H1 (cell line): ENCODE measurements at regions of chr12 and their contacts with region 1.

Region 1: GRCh38 chr12:52032804-52033502 is 18.3 kb upstream of the NR4A1 start:
- DNase-seq: peak; percentile 87 to 90
- H3K4me3 ChIP-seq: peak overlapping the region; percentile 23 to 60 (median 38); a peak in 7 of 8 replicates
- H3K27ac ChIP-seq: peak overlapping the region; percentile 39; the same call in 1 of the 2 replicates
- H3K4me1 ChIP-seq: peaks cover 9 to 13% (median 11%) of the 10 kb centered on the region in 4 experiments
- H3K27me3 ChIP-seq: peaks cover 2 to 32% (median 22%) of the 10 kb centered on the region in 4 experiments; a peak in 6 of 7 replicates
- CTCF ChIP-seq: no peak
- EP300 ChIP-seq: peak in 1 of 2 experiments; percentile 31; a peak in 1 of 3 replicates
- POLR2A ChIP-seq: peak in 1 of 2 experiments; percentile 62; a peak in 2 of 3 replicates
- RAD21 ChIP-seq: no peak

Region 2: DNA sequence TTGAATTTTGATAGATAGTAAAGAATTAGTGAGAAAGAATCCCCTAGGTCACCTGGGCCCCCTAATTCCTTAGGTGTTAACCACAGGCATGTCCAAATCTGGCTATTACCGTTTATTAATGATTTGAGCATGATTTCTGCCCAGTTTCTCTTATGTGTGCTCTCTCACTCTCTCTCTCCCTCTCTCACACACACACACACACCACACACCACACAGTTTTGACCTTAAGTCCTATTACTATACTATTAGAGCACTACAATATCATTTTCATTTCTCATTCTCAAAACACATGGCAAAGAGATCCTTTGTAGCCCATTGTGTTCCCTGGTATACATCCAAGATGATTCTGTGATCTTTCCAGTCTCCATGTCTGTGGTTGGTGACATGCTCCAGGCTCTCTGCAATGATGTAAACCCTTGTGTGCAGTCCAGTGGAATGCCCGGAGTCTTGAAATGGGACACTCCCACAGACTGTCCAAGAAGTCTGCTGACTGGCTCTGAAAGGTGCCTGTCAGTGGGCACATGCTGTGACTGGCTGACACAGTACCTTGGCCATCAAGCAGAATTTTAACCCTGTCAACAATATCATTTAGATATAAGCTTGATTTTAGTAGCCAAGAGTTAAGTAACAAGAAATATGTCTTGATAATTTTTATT is 280.6 kb before region 1 on chr12:
- CTCF ChIA-PET with region 1: no interaction called
- POLR2A ChIA-PET with region 1: no interaction called
- DNase-seq: no peak
- H3K4me3 ChIP-seq: no peak overlapping the region
- H3K27ac ChIP-seq: no peak overlapping the region
- H3K4me1 ChIP-seq: no peaks in the 10 kb centered on the region
- H3K27me3 ChIP-seq: no peaks in the 10 kb centered on the region
- CTCF ChIP-seq: no peak
- EP300 ChIP-seq: no peak
- POLR2A ChIP-seq: no peak
- RAD21 ChIP-seq: no peak

Region 3: DNA sequence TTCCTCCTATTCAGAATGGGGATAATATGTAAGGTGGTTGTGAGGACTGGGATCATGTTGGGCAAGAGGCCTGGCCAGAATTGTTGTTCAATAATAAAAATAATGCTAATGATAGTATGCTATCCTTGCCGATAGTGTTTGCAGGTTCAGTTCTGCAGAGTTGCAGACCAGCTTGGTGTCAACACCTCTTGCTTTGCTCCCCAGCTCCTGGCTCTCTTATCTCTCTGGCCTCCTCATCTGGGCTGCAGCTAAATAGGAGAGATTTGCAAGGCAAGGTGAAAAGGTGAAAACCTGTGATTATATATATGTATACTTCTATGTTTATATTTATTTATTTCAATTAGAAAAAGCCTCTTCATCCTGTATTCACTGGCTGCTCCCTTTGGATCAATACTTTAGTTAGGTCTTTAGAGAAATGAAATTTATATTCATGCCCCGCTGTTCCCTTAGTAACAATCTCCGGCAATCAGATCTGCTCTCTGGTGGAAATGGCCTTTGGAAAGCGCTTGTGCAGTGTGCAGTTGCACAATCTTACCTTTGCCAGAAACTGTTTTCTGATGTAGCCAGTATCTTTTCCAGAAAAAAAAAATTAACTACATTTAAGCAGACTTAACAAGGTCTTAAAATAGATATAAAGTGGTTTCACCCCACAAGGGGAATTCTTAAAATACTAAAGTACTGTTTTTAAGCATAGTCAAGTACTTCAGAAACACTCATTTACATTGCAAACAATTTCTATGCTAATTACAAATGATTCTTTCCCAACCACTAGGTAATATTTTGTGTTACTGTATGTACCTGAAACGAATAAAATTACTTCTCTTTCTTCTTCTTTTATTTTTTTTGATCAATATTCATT is 100.5 kb before region 1 on chr12:
- CTCF ChIA-PET with region 1: no interaction called
- POLR2A ChIA-PET with region 1: no interaction called
- DNase-seq: no peak
- H3K4me3 ChIP-seq: no peak overlapping the region
- H3K27ac ChIP-seq: no peak overlapping the region
- H3K4me1 ChIP-seq: no peaks in the 10 kb centered on the region
- H3K27me3 ChIP-seq: no peaks in the 10 kb centered on the region
- CTCF ChIP-seq: no peak
- EP300 ChIP-seq: no peak
- POLR2A ChIP-seq: no peak
- RAD21 ChIP-seq: no peak

Region 4: GRCh38 chr12:51951199-51951842 is 81.6 kb before region 1 on chr12 and contains the start of gene ACVR1B:
- CTCF ChIA-PET with region 1: no interaction called
- POLR2A ChIA-PET with region 1: no interaction called
- DNase-seq: peak in 1 of 2 experiments; percentile 87
- H3K4me3 ChIP-seq: peak within 1 kb of the TSS; percentile 73 to 95 (median 90)
- H3K27ac ChIP-seq: peak within 1 kb of the TSS; percentile 52; the same call in 1 of the 2 replicates
- H3K4me1 ChIP-seq: peaks cover 0 to 3% (median 2%) of the 10 kb centered on the region in 4 experiments; a peak in 6 of 7 replicates
- H3K27me3 ChIP-seq: peaks cover 7 to 47% (median 34%) of the 10 kb centered on the region in 4 experiments
- CTCF ChIP-seq: no peak
- EP300 ChIP-seq: no peak
- POLR2A ChIP-seq: peak in 1 of 2 experiments; percentile 1; a peak in 1 of 3 replicates
- RAD21 ChIP-seq: no peak
- total RNA-seq, gene ACVR1B: 13.5 and 16.0 TPM in 2 replicates

Region 5: GRCh38 chr12:52050761-52051541 is 18.0 kb after region 1 on chr12 and contains the start of gene NR4A1:
- CTCF ChIA-PET with region 1: interaction called, 1,022 read pairs
- POLR2A ChIA-PET with region 1: interaction called, 38 read pairs
- DNase-seq: peak in 1 of 2 experiments; percentile 87
- H3K4me3 ChIP-seq: peak within 1 kb of the TSS; percentile 44 to 72 (median 64)
- H3K27ac ChIP-seq: no peak within 1 kb of the TSS
- H3K4me1 ChIP-seq: peaks cover 0 to 19% (median 9%) of the 10 kb centered on the region in 4 experiments; a peak in 6 of 7 replicates
- H3K27me3 ChIP-seq: peaks cover 4 to 44% (median 36%) of the 10 kb centered on the region in 4 experiments
- CTCF ChIP-seq: no peak
- EP300 ChIP-seq: 0 out of 3 replicates have a peak, but pooled peaks of 1 of the 2 experiments have one; percentile 7
- POLR2A ChIP-seq: no peak; a peak in 1 of 3 replicates
- RAD21 ChIP-seq: no peak
- total RNA-seq, gene NR4A1: 18.7 and 19.3 TPM in 2 replicates

Region 6: DNA sequence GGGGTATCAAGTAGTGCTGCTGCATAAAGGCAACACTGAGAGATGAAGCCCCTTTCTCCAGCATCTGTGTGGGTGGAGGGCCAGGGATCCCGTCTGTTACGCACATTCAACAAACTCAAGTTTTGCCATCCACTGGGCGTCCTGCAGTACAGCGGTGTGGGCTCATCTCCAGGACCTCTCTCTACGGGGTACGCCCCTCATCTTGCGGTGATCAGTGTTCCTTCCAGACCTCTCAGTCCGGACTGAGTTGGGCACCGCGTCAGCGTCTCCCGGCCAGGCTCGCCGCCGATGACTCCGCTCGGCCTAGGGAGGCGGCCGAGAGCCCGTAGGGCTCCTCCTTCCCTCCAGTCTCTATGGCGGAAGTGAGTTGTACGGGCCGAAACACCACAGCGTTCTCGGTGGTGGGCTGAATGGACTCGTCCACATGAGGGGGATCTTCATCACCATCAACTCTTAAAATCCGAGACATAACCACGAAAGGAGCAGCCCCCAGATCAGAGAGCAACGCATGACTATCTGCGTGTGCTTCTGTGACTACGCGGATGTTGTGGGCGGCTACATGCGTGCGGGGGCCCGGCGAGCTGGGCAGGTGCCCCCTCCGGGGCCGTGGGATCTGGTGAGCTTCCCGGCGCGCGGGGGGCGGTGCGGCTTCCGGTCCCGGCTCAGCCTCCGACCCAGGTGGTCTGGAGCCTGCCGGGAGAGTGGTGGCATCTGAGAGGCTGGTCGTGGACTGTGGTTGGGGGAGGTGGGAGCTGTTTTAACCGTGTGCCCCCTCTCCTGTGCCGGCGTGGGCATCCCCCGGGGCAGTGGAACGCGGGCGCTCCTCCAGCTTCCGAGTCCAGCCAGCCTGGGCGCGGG is 36.6 kb after region 1 on chr12 and contains the start of gene ATG101:
- CTCF ChIA-PET with region 1: interaction called, 1,022 read pairs
- POLR2A ChIA-PET with region 1: interaction called, 21 read pairs
- DNase-seq: peak; percentile 82 to 90
- H3K4me3 ChIP-seq: peak within 1 kb of the TSS; percentile 89 to 97 (median 95)
- H3K27ac ChIP-seq: peak within 1 kb of the TSS; percentile 99
- H3K4me1 ChIP-seq: peaks cover 0 to 12% (median 3%) of the 10 kb centered on the region in 4 experiments; a peak in 4 of 7 replicates
- H3K27me3 ChIP-seq: no peaks in the 10 kb centered on the region; a peak in 2 of 7 replicates
- CTCF ChIP-seq: peak; percentile 88 to 96 (median 96)
- EP300 ChIP-seq: peak in 1 of 2 experiments; percentile 100; a peak in 2 of 3 replicates
- POLR2A ChIP-seq: peak in 1 of 2 experiments; percentile 69; a peak in 1 of 3 replicates
- RAD21 ChIP-seq: peak; percentile 19 to 29; a peak in 3 of 4 replicates
- total RNA-seq, gene ATG101: 48.9 and 49.8 TPM in 2 replicates

Region 7: DNA sequence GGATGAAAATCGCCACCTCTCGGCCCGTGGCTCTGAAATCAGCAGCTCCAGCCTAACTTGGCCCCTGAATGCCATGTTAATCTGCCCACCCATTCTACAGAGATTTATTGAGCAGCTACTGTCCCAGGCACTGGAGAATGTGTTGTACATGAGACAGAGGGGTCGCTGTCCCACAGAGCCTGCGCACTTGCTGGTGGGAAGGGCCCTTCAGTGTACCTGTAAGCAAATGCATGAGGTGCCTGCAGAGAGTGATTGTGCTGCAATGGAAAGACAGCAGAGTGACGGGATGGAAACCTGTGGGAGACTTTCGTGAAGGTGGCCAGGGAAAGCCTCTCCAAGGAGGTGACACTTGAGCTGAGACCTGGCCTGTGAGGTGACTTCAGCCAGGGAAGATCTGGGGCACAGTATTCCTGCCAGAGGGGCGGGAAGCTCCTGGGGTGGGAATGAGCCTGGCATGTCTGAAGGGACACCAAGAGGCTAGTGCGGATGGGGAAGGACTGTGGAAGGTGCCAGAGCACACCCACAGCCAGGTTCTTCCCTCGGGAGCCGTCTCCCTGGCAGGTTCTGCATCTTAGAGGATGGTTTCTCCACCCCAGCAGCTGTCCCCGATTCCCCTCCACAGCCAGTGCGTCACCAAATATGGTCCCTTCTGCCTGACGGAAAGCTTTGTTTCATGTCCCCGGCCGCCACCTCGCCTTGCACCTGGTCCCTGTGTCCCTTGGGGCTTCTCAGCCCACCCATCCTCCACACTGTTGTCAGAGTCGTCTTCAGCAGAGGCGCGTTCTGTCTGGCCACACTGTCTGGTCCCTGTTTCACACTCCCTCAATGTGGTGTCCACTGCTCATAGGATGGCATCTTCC is 55.2 kb after region 1 on chr12:
- CTCF ChIA-PET with region 1: interaction called, 1,022 read pairs
- POLR2A ChIA-PET with region 1: interaction called, 82 read pairs
- DNase-seq: no peak
- H3K4me3 ChIP-seq: no peak overlapping the region
- H3K27ac ChIP-seq: no peak overlapping the region
- H3K4me1 ChIP-seq: peaks cover 0 to 1% (median 0%) of the 10 kb centered on the region in 4 experiments; a peak in 2 of 7 replicates
- H3K27me3 ChIP-seq: no peaks in the 10 kb centered on the region
- CTCF ChIP-seq: no peak
- EP300 ChIP-seq: no peak
- POLR2A ChIP-seq: no peak
- RAD21 ChIP-seq: no peak